ENCODE measurements at regions of chr14 and their contacts with region 1.

Region 1: DNA sequence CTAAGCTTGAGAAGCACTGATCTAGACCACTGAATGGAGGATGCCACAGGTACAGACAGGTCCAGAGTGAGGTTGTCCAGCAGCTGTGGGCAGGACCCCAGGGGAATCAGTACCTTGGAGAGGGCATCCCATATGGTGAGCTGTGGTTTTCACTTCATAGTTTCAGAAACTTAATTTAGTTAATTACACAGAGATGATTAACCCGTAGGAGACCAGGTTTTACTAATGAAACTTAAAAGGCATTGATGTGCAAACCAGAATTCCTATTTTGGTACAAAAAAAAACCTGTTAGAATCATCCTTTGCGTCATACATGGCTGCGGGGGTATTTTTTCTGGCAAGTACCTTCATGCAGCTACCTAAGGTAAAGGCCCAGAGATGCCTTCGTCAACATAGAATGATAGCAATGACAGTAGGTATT is 159.3 kb downstream of the DACT1 start:
- DNase-seq: peak; percentile 88
- ATAC-seq: peak; percentile 86
- H3K4me3 ChIP-seq: no peak overlapping the region
- H3K27ac ChIP-seq: no peak overlapping the region
- H3K4me1 ChIP-seq: peaks cover 7% of the 10 kb centered on the region; the same call in 1 of the 2 replicates
- H3K27me3 ChIP-seq: no peaks in the 10 kb centered on the region
- CTCF ChIP-seq: no peak
- EP300 ChIP-seq: peak; percentile 99 to 100
- POLR2A ChIP-seq: no peak
- RAD21 ChIP-seq: no peak

Region 2: GRCh38 chr14:58501214-58501816 is 295.7 kb before region 1 on chr14:
- CTCF ChIA-PET with region 1: interaction called, 11 read pairs
- POLR2A ChIA-PET with region 1: no interaction called
- RAD21 ChIA-PET with region 1: interaction called, 11 read pairs
- SMC1A ChIA-PET with region 1: interaction called, 14 read pairs
- in situ Hi-C with region 1: no loop called
- intact Hi-C with region 1: loop called (anchors 2 kb)
- DNase-seq: peak; percentile 30
- ATAC-seq: peak; percentile 91
- H3K4me3 ChIP-seq: no peak overlapping the region
- H3K27ac ChIP-seq: no peak overlapping the region
- H3K4me1 ChIP-seq: no peaks in the 10 kb centered on the region
- H3K27me3 ChIP-seq: no peaks in the 10 kb centered on the region
- CTCF ChIP-seq: peak; percentile 72 to 89 (median 75)
- EP300 ChIP-seq: no peak
- POLR2A ChIP-seq: no peak
- RAD21 ChIP-seq: peak; percentile 96

Region 3: DNA sequence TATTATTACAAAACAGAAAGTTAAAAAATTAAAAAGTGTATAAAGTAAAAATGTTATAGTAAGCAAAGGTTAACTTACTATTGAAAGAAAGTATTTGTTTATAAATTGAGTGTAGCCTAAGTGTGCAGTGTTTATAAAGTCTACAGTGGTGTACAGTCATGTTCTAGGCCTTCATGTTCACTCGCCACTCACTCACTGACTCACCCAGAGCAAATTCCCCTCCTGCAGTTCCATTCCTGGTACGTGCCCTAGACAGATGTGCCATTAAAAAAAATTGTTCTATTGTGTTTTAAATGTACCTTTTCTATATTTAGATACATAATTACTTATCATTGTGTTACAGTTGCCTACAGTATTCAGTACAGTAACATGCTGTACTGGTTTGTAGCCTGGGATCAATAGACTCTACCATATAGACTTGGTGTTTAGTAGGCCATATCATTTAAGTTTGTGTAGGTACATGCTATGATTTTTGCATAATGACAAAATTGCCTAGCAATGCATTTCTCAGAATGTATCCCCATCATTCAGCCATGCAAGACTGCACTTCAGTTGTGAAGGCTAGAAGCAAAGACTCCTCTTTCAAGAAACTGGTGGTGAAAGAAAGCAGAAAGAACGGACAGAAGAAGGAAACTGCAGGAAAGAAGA is 58.7 kb before region 1 on chr14:
- CTCF ChIA-PET with region 1: interaction called, 21 read pairs
- POLR2A ChIA-PET with region 1: interaction called, 3 read pairs
- RAD21 ChIA-PET with region 1: interaction called, 48 read pairs
- SMC1A ChIA-PET with region 1: interaction called, 112 read pairs
- in situ Hi-C with region 1: no loop called
- intact Hi-C with region 1: loop called (anchors 2 kb)
- DNase-seq: no peak
- ATAC-seq: no peak
- H3K4me3 ChIP-seq: no peak overlapping the region
- H3K27ac ChIP-seq: no peak overlapping the region
- H3K4me1 ChIP-seq: no peaks in the 10 kb centered on the region
- H3K27me3 ChIP-seq: no peaks in the 10 kb centered on the region
- CTCF ChIP-seq: no peak
- EP300 ChIP-seq: no peak
- POLR2A ChIP-seq: no peak
- RAD21 ChIP-seq: no peak

Region 4: DNA sequence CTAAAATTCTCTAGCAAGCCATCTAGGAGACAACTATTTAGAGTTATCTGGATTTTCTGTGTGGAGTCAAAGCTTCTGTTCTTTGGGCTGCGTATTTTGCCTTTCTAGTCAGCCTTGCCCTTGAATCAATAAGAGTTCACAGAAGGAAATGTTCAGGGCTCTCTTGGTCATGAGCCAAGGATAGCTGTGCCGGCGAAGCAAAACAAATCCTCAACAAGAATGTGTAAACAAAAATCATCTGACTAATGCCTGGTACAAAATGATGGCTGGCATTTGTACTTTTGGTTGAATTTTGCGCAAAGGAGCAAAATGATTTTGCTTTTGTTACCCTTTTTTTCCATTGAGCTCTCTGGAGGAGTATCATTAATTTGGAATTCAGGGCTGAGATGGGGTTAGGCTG is 11.8 kb after region 1 on chr14:
- CTCF ChIA-PET with region 1: interaction called, 49 read pairs
- POLR2A ChIA-PET with region 1: interaction called, 18 read pairs
- RAD21 ChIA-PET with region 1: interaction called, 64 read pairs
- SMC1A ChIA-PET with region 1: interaction called, 161 read pairs
- in situ Hi-C with region 1: no loop called
- intact Hi-C with region 1: no loop called
- DNase-seq: no peak
- ATAC-seq: no peak
- H3K4me3 ChIP-seq: no peak overlapping the region
- H3K27ac ChIP-seq: no peak overlapping the region
- H3K4me1 ChIP-seq: no peaks in the 10 kb centered on the region
- H3K27me3 ChIP-seq: no peaks in the 10 kb centered on the region
- CTCF ChIP-seq: no peak
- EP300 ChIP-seq: no peak
- POLR2A ChIP-seq: no peak
- RAD21 ChIP-seq: no peak

Region 5: DNA sequence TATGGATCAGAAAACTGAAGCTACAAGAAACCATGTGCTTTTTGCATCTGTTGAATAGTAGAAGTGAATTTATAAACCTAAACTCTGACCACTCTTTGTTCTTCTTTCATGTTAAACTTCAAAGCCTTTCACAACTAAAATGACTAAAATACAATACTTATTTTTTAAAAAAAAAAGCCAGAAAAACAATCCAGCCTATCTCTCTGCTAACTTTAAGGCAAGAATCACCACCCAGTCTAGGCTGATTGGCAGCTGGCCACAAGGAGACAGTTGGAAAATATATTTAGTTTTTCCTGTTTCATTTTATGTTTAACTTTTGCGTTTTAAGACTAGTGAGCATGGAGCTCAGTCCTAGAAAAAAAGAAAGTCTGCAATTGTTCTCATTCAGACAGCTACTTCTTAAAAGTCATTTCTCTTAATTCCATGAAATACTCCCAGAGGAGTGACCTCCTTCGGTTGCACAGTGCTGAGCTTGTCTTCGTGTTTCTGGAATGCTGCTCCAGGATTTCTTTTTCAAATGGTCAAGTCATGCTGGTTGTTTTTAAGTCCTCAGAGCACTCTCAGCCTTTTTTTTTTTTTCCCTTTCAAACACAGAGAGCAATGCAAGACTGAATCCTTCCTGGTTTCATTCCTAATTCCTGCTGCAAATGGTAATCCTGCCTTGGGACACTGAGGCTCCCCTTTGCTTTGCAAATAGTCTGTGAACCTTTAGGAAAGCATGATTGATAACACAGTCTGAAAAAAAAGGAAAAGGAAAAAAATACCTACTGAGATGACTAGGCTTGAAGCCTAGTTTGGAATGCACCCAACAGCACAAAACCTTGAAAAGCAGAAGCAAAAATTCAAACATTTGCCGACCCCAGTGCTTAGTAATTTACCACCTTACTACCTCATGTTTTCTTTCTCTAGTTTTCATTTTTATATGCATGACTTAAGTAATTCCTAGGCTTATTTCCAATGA is 158.2 kb after region 1 on chr14:
- CTCF ChIA-PET with region 1: interaction called, 5 read pairs
- POLR2A ChIA-PET with region 1: interaction called, 5 read pairs
- RAD21 ChIA-PET with region 1: interaction called, 110 read pairs
- SMC1A ChIA-PET with region 1: interaction called, 124 read pairs
- in situ Hi-C with region 1: loop called (anchors 5 kb)
- intact Hi-C with region 1: loop called (anchors 1 kb)
- DNase-seq: peak; percentile 55
- ATAC-seq: peak; percentile 81
- H3K4me3 ChIP-seq: peak overlapping the region; percentile 38; the same call in 1 of the 2 replicates
- H3K27ac ChIP-seq: peak overlapping the region; percentile 86
- H3K4me1 ChIP-seq: peaks cover 18% of the 10 kb centered on the region
- H3K27me3 ChIP-seq: no peaks in the 10 kb centered on the region
- CTCF ChIP-seq: no peak
- EP300 ChIP-seq: peak; percentile 68 to 77; a peak in 3 of 4 replicates
- POLR2A ChIP-seq: no peak
- RAD21 ChIP-seq: no peak

Region 6: GRCh38 chr14:59028476-59029202 is 231.6 kb after region 1 on chr14:
- CTCF ChIA-PET with region 1: interaction called, 7 read pairs
- POLR2A ChIA-PET with region 1: no interaction called
- RAD21 ChIA-PET with region 1: interaction called, 9 read pairs
- SMC1A ChIA-PET with region 1: interaction called, 15 read pairs
- in situ Hi-C with region 1: no loop called
- intact Hi-C with region 1: loop called (anchors 1 kb)
- DNase-seq: peak; percentile 31
- ATAC-seq: peak; percentile 100
- H3K4me3 ChIP-seq: no peak overlapping the region
- H3K27ac ChIP-seq: no peak overlapping the region
- H3K4me1 ChIP-seq: no peaks in the 10 kb centered on the region
- H3K27me3 ChIP-seq: no peaks in the 10 kb centered on the region
- CTCF ChIP-seq: peak; percentile 88 to 94 (median 91)
- EP300 ChIP-seq: no peak
- POLR2A ChIP-seq: no peak
- RAD21 ChIP-seq: peak; percentile 85

Region 7: DNA sequence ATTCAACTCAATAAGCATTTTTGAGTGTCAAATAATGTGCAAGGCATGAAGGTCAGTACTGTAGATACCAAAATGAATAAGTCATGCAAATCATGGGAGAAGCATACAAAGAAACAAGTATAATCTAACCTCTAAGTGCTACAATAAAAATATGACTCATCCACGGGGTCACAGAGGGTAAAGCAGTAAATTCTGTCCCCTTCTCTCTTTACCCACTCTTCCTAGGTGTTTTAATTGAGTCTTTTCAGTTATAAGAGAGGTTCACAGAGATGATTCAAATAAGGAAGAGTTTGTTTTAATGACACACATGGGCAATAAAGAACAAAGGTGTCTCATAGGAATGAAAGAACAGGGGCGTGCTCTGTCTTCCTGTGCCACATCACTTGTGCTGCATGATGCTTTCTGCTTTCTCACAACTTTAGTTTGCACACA is 320.0 kb after region 1 on chr14:
- CTCF ChIA-PET with region 1: no interaction called
- POLR2A ChIA-PET with region 1: no interaction called
- RAD21 ChIA-PET with region 1: interaction called, 3 read pairs
- SMC1A ChIA-PET with region 1: no interaction called
- in situ Hi-C with region 1: no loop called
- intact Hi-C with region 1: loop called (anchors 10 kb)
- DNase-seq: peak; percentile 44
- ATAC-seq: peak; percentile 95
- H3K4me3 ChIP-seq: no peak overlapping the region
- H3K27ac ChIP-seq: no peak overlapping the region
- H3K4me1 ChIP-seq: no peaks in the 10 kb centered on the region
- H3K27me3 ChIP-seq: no peaks in the 10 kb centered on the region; a peak in 1 of 4 replicates
- CTCF ChIP-seq: no peak
- EP300 ChIP-seq: peak; percentile 18 to 79; a peak in 3 of 4 replicates
- POLR2A ChIP-seq: no peak
- RAD21 ChIP-seq: no peak

Measured in GM12878 (cell line).